ENCODE measurements at regions of chr15 and their contacts with region 1.

Region 1: GRCh38 chr15:43776718-43777583 is at the start of gene ELL3:
- DNase-seq: peak; percentile 79 to 89 (median 85)
- H3K4me3 ChIP-seq: peak within 1 kb of the TSS; percentile 62
- H3K4me3 Mint-ChIP-seq: peak within 1 kb of the TSS; percentile 89 to 97 (median 94)
- H3K27ac ChIP-seq: peak within 1 kb of the TSS; percentile 49
- H3K27ac Mint-ChIP-seq: peak within 1 kb of the TSS; percentile 83 to 96 (median 92)
- H3K4me1 ChIP-seq: peaks cover 16% of the 10 kb centered on the region
- H3K4me1 Mint-ChIP-seq: peaks cover 18 to 25% (median 18%) of the 10 kb centered on the region in 3 donors
- H3K27me3 ChIP-seq: no peaks in the 10 kb centered on the region
- H3K27me3 Mint-ChIP-seq: no peaks in the 10 kb centered on the region
- total RNA-seq, gene ELL3: 0.49 to 1.8 TPM

Region 2: GRCh38 chr15:43749690-43750345 is 27.1 kb before region 1 on chr15:
- CTCF ChIA-PET with region 1: interaction called, 10 read pairs
- POLR2A ChIA-PET with region 1: interaction called, 9 read pairs
- DNase-seq: peak; percentile 32 to 81 (median 62)
- H3K4me3 ChIP-seq: peak overlapping the region; percentile 20
- H3K4me3 Mint-ChIP-seq: peak overlapping the region; percentile 74 to 97 (median 81)
- H3K27ac ChIP-seq: peak overlapping the region; percentile 50
- H3K27ac Mint-ChIP-seq: peak overlapping the region; percentile 81 to 99 (median 92)
- H3K4me1 ChIP-seq: peaks cover 54% of the 10 kb centered on the region
- H3K4me1 Mint-ChIP-seq: peaks cover 50 to 75% (median 53%) of the 10 kb centered on the region in 3 donors
- H3K27me3 ChIP-seq: no peaks in the 10 kb centered on the region
- H3K27me3 Mint-ChIP-seq: no peaks in the 10 kb centered on the region

Region 3: GRCh38 chr15:43791993-43792760 is 15.2 kb after region 1 on chr15 and contains the start of gene SERF2:
- CTCF ChIA-PET with region 1: interaction called, 16 read pairs
- POLR2A ChIA-PET with region 1: interaction called, 24 read pairs
- DNase-seq: peak; percentile 98 to 100 (median 99)
- H3K4me3 ChIP-seq: peak within 1 kb of the TSS; percentile 97
- H3K4me3 Mint-ChIP-seq: peak within 1 kb of the TSS; percentile 95 to 98 (median 97)
- H3K27ac ChIP-seq: peak within 1 kb of the TSS; percentile 97
- H3K27ac Mint-ChIP-seq: peak within 1 kb of the TSS; percentile 96 to 100 (median 98)
- H3K4me1 ChIP-seq: peaks cover 33% of the 10 kb centered on the region
- H3K4me1 Mint-ChIP-seq: peaks cover 40 to 55% (median 47%) of the 10 kb centered on the region in 3 donors
- H3K27me3 ChIP-seq: no peaks in the 10 kb centered on the region
- H3K27me3 Mint-ChIP-seq: no peaks in the 10 kb centered on the region
- total RNA-seq, gene SERF2: 624 to 632 TPM

Region 4: DNA sequence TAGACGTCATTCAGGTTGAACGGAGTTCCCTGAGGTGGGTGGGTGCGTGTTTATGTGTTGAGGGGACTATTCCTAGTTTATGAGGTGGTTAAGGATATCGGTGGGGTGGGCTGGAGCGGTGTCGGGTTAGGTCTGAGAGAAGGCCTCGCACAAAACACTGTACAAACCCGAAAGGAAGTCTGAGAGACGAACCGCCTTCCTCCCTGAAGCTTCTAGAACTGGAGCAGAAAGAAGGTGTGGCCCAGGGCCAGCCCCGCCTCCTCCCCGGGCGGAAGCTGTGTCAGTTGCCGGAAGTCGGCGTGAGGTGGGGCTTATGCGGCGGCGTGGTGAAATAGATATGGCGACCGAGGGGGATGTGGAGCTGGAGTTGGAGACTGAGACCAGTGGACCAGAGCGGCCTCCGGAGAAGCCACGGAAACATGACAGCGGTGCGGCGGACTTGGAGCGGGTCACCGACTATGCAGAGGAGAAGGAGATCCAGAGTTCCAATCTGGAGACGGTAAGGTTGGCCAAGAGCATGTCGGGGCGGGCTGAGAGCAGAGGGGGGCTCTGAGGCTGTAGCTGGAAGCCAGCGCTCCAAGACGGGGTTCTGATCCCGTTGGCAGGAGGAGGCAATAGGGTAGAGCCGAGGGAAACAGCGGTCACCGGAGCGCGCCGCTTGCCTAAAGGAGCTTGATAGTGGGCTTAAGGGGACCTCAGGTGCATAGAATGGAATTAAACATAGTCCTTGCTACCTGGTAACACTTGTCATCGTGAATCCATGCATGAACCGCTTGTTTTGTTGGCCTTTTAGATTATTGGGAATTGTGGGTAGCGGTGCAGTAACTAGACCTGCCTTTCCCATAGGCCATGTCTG is 23.6 kb after region 1 on chr15 and contains the start of gene HYPK:
- CTCF ChIA-PET with region 1: interaction called, 6 read pairs
- POLR2A ChIA-PET with region 1: interaction called, 18 read pairs
- DNase-seq: peak; percentile 88 to 94 (median 89)
- H3K4me3 ChIP-seq: peak within 1 kb of the TSS; percentile 88
- H3K4me3 Mint-ChIP-seq: peak within 1 kb of the TSS; percentile 94 to 100 (median 97)
- H3K27ac ChIP-seq: peak within 1 kb of the TSS; percentile 89
- H3K27ac Mint-ChIP-seq: peak within 1 kb of the TSS; percentile 86 to 100 (median 98)
- H3K4me1 ChIP-seq: peaks cover 20% of the 10 kb centered on the region
- H3K4me1 Mint-ChIP-seq: peaks cover 37 to 58% (median 51%) of the 10 kb centered on the region in 3 donors
- H3K27me3 ChIP-seq: no peaks in the 10 kb centered on the region
- H3K27me3 Mint-ChIP-seq: no peaks in the 10 kb centered on the region
- total RNA-seq, gene HYPK: 28.5 to 32.7 TPM

Region 5: GRCh38 chr15:43939070-43939469 is 162.1 kb after region 1 on chr15:
- CTCF ChIA-PET with region 1: no interaction called
- POLR2A ChIA-PET with region 1: no interaction called
- DNase-seq: no peak
- H3K4me3 ChIP-seq: no peak overlapping the region
- H3K4me3 Mint-ChIP-seq: no peak overlapping the region
- H3K27ac ChIP-seq: no peak overlapping the region
- H3K27ac Mint-ChIP-seq: no peak overlapping the region
- H3K4me1 ChIP-seq: no peaks in the 10 kb centered on the region
- H3K4me1 Mint-ChIP-seq: no peaks in the 10 kb centered on the region
- H3K27me3 ChIP-seq: no peaks in the 10 kb centered on the region
- H3K27me3 Mint-ChIP-seq: peaks cover 5 to 24% of the 10 kb centered on the region in 2 donors